Sigmoid colon (tissue), 7 donors: ENCODE measurements at regions of chr7 and their contacts with region 1.

Region 1: GRCh38 chr7:93902777-93903423 is 3.5 kb upstream of the GNGT1 start:
- DNase-seq: no peak
- H3K4me3 ChIP-seq: no peak overlapping the region
- H3K27ac ChIP-seq: no peak overlapping the region
- H3K4me1 ChIP-seq: peaks cover 0 to 5% (median 0%) of the 10 kb centered on the region in 4 donors
- H3K27me3 ChIP-seq: no peaks in the 10 kb centered on the region
- CTCF ChIP-seq: peak; percentile 24 to 83 (median 52)
- EP300 ChIP-seq: no peak
- POLR2A ChIP-seq: no peak

Region 2: GRCh38 chr7:94087664-94088352 is 184.9 kb after region 1 on chr7:
- intact Hi-C with region 1: loop called (anchors 2 kb)
- DNase-seq: no peak
- H3K4me3 ChIP-seq: peak overlapping the region in 3 of 4 donors; percentile 26 to 31 (median 27)
- H3K27ac ChIP-seq: no peak overlapping the region
- H3K4me1 ChIP-seq: no peaks in the 10 kb centered on the region
- H3K27me3 ChIP-seq: no peaks in the 10 kb centered on the region
- CTCF ChIP-seq: peak; percentile 37 to 75 (median 68)
- EP300 ChIP-seq: no peak
- POLR2A ChIP-seq: no peak